ENCODE measurements at regions of chr21 and their contacts with region 1.

Region 1: DNA sequence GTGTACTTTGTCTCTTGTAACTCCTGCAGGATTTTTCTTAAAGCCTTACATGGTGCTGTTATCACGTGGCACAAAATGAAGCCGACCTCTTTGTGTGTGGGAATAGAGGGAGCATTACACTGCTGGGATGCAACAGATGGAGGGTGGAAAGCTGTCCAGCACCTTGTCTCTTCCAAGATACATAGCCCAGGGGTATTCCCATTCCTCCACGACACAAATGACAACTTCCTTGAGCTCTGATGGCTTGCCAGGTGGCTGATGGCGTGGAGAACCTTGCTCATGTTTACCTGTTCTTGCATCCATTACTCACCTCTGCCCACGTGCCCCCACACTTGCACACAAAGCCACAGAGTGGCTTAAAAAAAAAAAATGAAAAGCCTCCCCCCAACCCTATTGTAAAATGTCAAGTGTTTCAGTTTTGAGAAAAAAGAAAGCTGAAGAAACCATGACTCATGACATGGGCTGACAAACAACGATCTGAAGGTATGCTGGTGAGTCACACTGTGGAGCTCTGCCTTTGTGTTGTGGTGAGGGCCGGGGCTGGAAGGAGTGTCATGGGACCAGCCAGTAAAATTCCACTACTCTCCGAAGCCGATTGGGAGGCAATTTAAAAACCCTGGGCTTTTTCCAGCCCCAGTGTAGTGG is 32.0 kb upstream of the ATP5PO start:
- DNase-seq: peak; percentile 68 to 97 (median 80)
- ATAC-seq: peak; percentile 59
- H3K4me3 ChIP-seq: peak overlapping the region; percentile 36
- H3K4me3 Mint-ChIP-seq: peak overlapping the region; percentile 65
- H3K27ac ChIP-seq: peak overlapping the region; percentile 93 to 98
- H3K27ac Mint-ChIP-seq: peak overlapping the region; percentile 93
- H3K4me1 ChIP-seq: peaks cover 76% of the 10 kb centered on the region
- H3K4me1 Mint-ChIP-seq: peaks cover 75% of the 10 kb centered on the region
- H3K27me3 ChIP-seq: no peaks in the 10 kb centered on the region
- H3K27me3 Mint-ChIP-seq: no peaks in the 10 kb centered on the region
- CTCF ChIP-seq: no peak

Region 2: GRCh38 chr21:33931799-33932390 is 15.7 kb before region 1 on chr21:
- CTCF ChIA-PET with region 1: interaction called, 24 read pairs
- POLR2A ChIA-PET with region 1: interaction called, 519 read pairs
- intact Hi-C with region 1: loop called (anchors 1 to 2 kb)
- DNase-seq: peak in 4 of 14 experiments; percentile 18 to 72 (median 49)
- ATAC-seq: peak; percentile 24
- H3K4me3 ChIP-seq: peak overlapping the region; percentile 71
- H3K4me3 Mint-ChIP-seq: peak overlapping the region; percentile 94
- H3K27ac ChIP-seq: peak overlapping the region; percentile 88 to 95
- H3K27ac Mint-ChIP-seq: peak overlapping the region; percentile 98
- H3K4me1 ChIP-seq: peaks cover 43% of the 10 kb centered on the region
- H3K4me1 Mint-ChIP-seq: peaks cover 59% of the 10 kb centered on the region
- H3K27me3 ChIP-seq: no peaks in the 10 kb centered on the region
- H3K27me3 Mint-ChIP-seq: no peaks in the 10 kb centered on the region
- CTCF ChIP-seq: no peak

Region 3: DNA sequence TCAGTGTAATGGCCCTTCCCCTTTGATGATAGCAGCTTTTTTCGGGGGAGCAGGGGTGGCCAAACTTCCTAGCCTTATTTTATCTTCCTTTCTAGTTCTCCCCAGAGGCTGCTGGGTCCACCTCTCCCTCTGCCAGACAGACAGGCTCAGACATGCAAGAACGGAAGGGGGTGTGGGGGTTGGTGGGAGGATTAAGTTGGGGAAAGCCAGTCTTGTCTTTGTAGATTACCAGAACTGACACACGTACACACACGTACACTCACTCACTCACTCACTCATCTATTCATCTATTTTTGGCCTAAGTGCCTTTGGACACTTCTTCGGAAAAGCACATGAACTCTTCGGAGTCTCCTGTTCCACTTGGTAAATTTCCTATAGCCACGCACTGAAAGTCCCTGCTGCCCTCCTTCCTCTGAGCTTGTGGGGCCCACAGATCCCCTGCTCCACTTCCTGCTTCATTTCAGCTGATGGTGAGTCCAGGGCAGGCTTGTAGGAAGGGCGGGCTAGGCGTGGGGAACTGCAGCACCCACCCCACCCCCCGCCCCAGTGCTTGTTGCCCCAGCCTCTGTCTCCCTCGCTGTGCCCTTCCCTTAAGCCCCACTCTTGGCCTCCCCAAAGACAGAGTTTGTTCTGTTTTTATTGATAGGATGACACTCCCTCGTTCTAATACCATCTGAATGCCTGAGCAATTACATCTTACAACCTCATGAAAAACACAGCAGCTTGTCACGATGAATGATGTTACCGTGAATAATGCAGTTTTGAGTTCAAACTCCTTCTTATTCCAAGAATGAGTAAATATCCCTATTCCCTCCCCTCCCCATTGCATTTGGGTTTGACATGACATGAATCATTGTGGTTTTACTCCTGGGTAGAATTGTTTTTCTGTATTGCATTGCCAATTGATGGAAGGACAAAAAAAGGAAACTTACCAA is 28.8 kb after region 1 on chr21:
- CTCF ChIA-PET with region 1: no interaction called
- POLR2A ChIA-PET with region 1: interaction called, 43 read pairs
- intact Hi-C with region 1: loop called in 1 of 2 experiments (anchors 1 kb)
- DNase-seq: peak; percentile 19 to 80 (median 54)
- ATAC-seq: peak; percentile 75
- H3K4me3 ChIP-seq: peak overlapping the region; percentile 15
- H3K4me3 Mint-ChIP-seq: peak overlapping the region; percentile 49
- H3K27ac ChIP-seq: peak overlapping the region; percentile 65 to 71
- H3K27ac Mint-ChIP-seq: peak overlapping the region; percentile 88
- H3K4me1 ChIP-seq: peaks cover 34% of the 10 kb centered on the region
- H3K4me1 Mint-ChIP-seq: peaks cover 50% of the 10 kb centered on the region
- H3K27me3 ChIP-seq: no peaks in the 10 kb centered on the region
- H3K27me3 Mint-ChIP-seq: no peaks in the 10 kb centered on the region
- CTCF ChIP-seq: no peak

Region 4: DNA sequence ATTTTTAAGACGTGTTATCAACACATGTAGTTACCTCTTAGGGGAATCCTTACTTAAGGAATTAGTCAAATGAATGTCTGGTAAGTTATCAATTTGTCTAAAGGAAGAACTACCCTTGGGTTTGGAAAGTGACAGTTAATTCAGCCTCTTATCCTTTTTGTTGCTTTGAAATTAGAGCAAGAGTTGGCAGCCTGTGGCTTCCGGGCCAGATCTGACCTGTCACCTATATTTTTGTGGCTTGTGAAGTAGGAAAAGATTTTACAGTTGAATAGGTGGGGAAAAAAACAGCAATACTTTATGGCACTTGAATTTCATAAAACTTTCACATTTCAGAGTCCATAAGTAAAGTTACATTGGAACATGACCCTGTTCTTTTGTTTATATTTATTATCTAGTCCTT is 131.3 kb after region 1 on chr21:
- CTCF ChIA-PET with region 1: interaction called, 12 read pairs
- POLR2A ChIA-PET with region 1: interaction called, 71 read pairs
- intact Hi-C with region 1: loop called in 1 of 2 experiments (anchors 2 kb)
- DNase-seq: peak in 5 of 14 experiments; percentile 10 to 61 (median 39)
- ATAC-seq: peak; percentile 30
- H3K4me3 ChIP-seq: no peak overlapping the region
- H3K4me3 Mint-ChIP-seq: peak overlapping the region; percentile 60
- H3K27ac ChIP-seq: no peak overlapping the region
- H3K27ac Mint-ChIP-seq: peak overlapping the region; percentile 48
- H3K4me1 ChIP-seq: peaks cover 43% of the 10 kb centered on the region
- H3K4me1 Mint-ChIP-seq: peaks cover 97% of the 10 kb centered on the region
- H3K27me3 ChIP-seq: no peaks in the 10 kb centered on the region
- H3K27me3 Mint-ChIP-seq: no peaks in the 10 kb centered on the region
- CTCF ChIP-seq: no peak

Region 5: DNA sequence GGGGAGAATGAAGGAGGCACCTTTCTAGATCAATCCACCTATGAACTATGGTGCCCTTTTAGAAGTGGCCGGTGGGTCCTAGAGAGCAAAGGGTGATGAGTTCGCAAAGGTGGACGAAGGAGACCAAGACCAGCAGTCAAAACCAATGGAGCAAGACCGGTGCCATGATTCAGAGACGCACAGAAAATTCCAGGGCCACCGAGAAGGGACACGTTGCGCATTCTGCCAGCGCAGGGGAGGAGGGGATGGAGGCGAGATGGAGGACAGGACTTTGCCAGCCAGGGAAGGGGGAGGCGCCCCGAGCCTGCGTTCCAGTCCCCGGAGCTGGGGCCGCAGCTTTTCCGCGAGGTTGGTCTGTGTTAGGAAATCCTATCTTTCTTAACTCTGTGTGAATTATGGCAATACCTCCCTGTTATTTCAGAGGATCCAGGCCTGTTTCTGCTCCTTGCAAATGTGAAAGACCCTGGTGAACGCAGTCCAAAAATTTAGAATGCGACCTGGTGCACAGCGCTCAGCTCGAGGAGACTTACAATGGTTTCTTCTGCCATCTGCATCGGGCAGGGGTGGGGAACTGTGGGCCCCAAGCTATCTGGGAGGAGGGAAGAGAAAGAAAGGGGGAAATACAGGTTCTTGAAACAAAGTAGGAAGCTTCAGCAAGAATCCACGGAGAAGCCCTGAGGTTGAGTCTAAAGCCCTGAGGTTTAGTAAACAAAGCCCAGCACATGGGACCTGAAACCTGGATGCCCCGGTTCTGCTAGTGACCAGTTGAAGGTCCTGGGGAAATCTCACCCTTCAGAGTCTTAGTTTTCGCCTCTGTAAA is 255.2 kb after region 1 on chr21:
- CTCF ChIA-PET with region 1: interaction called, 4 read pairs
- POLR2A ChIA-PET with region 1: interaction called, 14 read pairs
- intact Hi-C with region 1: no loop called
- DNase-seq: peak in 3 of 14 experiments; percentile 7 to 33 (median 32)
- ATAC-seq: peak; percentile 21
- H3K4me3 ChIP-seq: peak overlapping the region; percentile 54
- H3K4me3 Mint-ChIP-seq: peak overlapping the region; percentile 84
- H3K27ac ChIP-seq: no peak overlapping the region
- H3K27ac Mint-ChIP-seq: peak overlapping the region; percentile 48
- H3K4me1 ChIP-seq: peaks cover 49% of the 10 kb centered on the region
- H3K4me1 Mint-ChIP-seq: peaks cover 52% of the 10 kb centered on the region
- H3K27me3 ChIP-seq: no peaks in the 10 kb centered on the region
- H3K27me3 Mint-ChIP-seq: no peaks in the 10 kb centered on the region
- CTCF ChIP-seq: no peak